Left ventricle myocardium superior (tissue), 1 donor: ENCODE measurements at regions of chr11 and their contacts with region 1.

Region 1: GRCh38 chr11:91825777-91826176 is 398.8 kb upstream of the FAT3 start:
- DNase-seq: no peak
- ATAC-seq: no peak

Region 2: DNA sequence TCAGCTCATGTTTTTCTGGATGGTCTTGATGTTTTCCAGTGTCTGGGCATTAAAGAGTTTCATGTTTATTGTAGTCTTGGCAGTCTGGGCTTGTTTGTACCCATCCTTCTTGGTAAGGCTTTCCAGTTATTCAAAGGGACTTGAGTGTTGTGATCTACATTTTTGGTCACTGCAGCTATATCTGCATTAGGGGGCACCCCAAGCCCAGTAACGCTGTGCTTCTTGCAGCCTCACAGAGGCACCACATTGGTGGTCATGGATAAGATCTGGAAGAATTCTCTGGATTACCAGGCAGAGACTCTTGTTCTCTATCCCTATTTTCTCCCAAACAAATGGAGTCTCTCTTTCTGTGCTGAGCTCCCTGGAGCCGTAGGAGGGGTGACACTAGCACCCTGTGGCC is 52.7 kb before region 1 on chr11:
- intact Hi-C with region 1: loop called (anchors 10 kb)
- DNase-seq: no peak
- ATAC-seq: no peak

Region 3: DNA sequence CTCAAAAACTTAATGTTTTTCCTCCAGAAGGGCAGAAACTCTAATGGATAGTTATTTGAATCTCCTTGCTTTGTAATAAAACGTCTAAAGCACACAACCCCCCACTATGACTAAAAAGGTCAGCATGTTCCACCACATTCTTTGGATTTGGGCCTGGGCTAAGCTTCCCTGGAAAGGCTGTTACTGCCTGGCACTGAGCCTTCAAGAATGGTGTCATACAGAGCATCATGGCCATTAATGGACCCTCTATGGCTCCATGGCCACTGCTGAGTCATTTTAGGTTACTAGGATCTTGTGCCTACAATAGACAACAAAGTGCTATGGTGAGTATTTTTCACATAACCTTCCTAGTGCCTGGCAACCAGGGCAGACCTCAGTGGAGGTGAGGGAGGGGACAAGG is 156.2 kb after region 1 on chr11:
- intact Hi-C with region 1: no loop called
- DNase-seq: peak; percentile 28
- ATAC-seq: peak; percentile 85